OCI-LY7 (cell line): ENCODE measurements at regions of chr12 and their contacts with region 1.

Region 1: GRCh38 chr12:96456265-96456974 is 33.0 kb upstream of the CFAP54 start:
- DNase-seq: peak; percentile 72
- H3K4me3 ChIP-seq: peak overlapping the region; percentile 21
- H3K27ac ChIP-seq: peak overlapping the region; percentile 14
- H3K4me1 ChIP-seq: peaks cover 41% of the 10 kb centered on the region
- CTCF ChIP-seq: no peak

Region 2: GRCh38 chr12:96208801-96209549 is 247.4 kb before region 1 on chr12:
- CTCF ChIA-PET with region 1: no interaction called
- POLR2A ChIA-PET with region 1: no interaction called
- intact Hi-C with region 1: loop called (anchors 5 kb)
- DNase-seq: peak; percentile 92
- H3K4me3 ChIP-seq: peak overlapping the region; percentile 33
- H3K27ac ChIP-seq: no peak overlapping the region
- H3K4me1 ChIP-seq: peaks cover 68% of the 10 kb centered on the region
- CTCF ChIP-seq: peak; percentile 49

Region 3: DNA sequence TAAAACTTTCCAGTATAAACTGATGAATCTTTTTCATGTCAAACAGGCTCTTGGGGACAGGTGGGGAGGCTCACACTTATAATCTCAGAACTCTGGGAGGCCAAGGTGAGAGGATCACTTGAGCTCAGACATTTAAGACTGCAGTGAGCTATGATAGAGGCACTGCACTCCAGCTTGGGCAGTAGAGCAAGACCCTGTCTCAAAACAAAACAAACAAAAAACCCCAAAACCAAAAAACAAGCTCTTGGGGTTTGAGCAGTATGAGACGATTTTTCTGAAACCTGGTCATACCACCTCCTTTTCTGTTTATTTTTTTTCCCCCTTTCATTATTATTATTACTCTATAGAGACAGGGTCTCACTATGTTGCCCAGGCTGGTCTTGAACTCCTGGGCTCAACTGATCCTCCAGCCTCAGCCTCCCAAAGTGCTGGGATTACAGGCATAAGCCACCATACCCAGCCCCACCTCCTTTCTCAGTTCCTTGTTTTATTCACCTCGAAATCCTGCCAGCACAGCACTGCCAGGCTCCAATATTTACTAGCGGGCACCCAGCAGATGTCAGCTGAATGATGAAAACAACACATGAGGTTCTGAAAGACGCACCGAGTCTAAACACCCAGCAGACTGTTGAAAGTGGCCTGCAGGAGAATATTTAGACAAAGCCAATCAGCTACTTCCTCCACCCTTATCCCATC is 36.7 kb before region 1 on chr12:
- CTCF ChIA-PET with region 1: no interaction called
- POLR2A ChIA-PET with region 1: no interaction called
- intact Hi-C with region 1: no loop called
- DNase-seq: no peak
- H3K4me3 ChIP-seq: no peak overlapping the region
- H3K27ac ChIP-seq: no peak overlapping the region
- H3K4me1 ChIP-seq: peaks cover 11% of the 10 kb centered on the region
- CTCF ChIP-seq: no peak

Region 4: DNA sequence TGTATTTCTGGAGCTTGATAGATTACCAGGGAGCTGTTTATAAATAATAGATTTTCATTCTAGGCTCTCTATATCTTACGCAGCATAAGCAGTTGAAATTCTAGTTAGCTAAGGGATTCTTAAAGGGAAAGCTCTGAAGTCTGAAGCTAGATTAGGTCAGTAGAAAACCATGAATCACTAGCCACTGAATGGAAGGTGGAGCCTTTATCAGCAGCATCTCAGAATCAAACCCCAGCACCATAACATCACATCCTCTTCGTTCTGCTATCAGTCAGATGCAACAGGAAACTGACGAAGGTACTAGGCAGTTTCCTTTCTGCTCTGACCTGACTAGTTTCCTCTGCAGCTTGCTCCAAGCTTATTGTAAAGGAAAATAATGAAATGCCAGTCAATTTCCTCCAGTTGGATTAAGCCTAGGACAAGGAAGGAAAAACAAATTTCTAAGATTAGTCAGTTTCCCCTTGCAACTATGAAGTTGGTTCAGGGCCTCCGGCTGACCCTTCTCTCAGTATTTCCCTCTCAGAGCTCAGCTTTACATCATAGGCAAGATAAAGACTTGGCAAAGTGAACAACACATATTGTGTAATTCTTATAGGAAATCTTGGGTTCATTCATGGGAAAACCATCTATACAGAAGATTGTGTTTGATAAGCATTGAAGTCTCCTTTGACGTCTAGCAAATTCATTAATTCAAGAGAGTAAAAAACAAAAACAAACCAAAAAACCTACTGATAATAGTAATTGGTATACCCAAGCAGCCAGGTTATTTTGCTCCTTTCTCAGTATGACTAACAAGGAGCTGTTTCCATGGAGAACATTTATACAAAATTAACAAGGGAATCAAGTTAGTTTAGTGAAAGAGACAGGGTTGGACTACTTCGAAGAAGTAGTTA is 10.5 kb before region 1 on chr12:
- CTCF ChIA-PET with region 1: interaction called, 6 read pairs
- POLR2A ChIA-PET with region 1: interaction called, 19 read pairs
- intact Hi-C with region 1: no loop called
- DNase-seq: peak; percentile 75
- H3K4me3 ChIP-seq: peak overlapping the region; percentile 13
- H3K27ac ChIP-seq: peak overlapping the region; percentile 49
- H3K4me1 ChIP-seq: peaks cover 17% of the 10 kb centered on the region
- CTCF ChIP-seq: no peak